Esophagus muscularis mucosa (tissue), 4 donors: ENCODE measurements at regions of chr11 and their contacts with region 1.

Region 1: GRCh38 chr11:134019500-134019899 is 49.4 kb upstream of the JAM3 start:
- DNase-seq: no peak
- H3K4me3 ChIP-seq: no peak overlapping the region
- H3K27ac ChIP-seq: no peak overlapping the region
- H3K4me1 ChIP-seq: peaks cover 2 to 17% (median 14%) of the 10 kb centered on the region in 4 donors
- H3K27me3 ChIP-seq: no peaks in the 10 kb centered on the region
- CTCF ChIP-seq: no peak
- EP300 ChIP-seq: no peak
- POLR2A ChIP-seq: no peak

Region 2: GRCh38 chr11:133834682-133835592 is 184.6 kb before region 1 on chr11:
- intact Hi-C with region 1: no loop called
- DNase-seq: peak; percentile 87
- H3K4me3 ChIP-seq: no peak overlapping the region
- H3K27ac ChIP-seq: no peak overlapping the region
- H3K4me1 ChIP-seq: peaks cover 0 to 13% (median 0%) of the 10 kb centered on the region in 4 donors
- H3K27me3 ChIP-seq: peaks cover 0 to 28% (median 9%) of the 10 kb centered on the region in 4 donors
- CTCF ChIP-seq: peak; percentile 67 to 77 (median 70)
- EP300 ChIP-seq: no peak
- POLR2A ChIP-seq: no peak

Region 3: DNA sequence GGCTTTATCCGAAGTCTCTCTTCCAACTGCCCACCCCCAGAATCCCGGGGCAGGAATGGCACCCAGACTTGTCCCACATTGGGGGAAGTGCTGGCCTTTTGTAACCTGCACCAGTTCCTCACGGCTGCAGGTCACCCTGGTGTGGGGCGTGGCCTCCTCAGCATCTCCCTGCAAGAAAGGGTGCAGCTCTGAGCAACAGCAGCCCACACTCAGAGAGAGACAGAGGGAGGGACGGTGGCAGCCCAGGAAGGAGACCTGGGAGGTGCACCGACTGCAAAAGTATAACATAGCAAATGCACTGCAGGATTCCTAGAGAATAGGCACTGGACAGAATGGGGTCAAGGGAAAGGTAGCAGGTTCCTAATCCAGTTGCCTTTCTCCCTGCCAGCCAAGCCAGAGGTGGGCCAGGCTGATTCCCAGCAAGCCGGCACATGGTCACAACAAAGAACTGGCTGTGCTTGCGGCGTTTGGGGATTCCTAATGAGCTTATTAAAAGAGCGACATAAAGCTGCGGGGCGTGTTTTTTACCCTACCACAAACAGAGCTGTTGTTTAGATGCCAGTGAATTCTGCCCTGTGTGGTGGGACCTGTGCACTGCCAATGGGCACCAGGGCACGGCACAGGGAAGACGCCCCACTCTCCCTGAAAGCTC is 44.5 kb before region 1 on chr11:
- intact Hi-C with region 1: loop called (anchors 5 kb)
- DNase-seq: no peak
- H3K4me3 ChIP-seq: no peak overlapping the region
- H3K27ac ChIP-seq: no peak overlapping the region
- H3K4me1 ChIP-seq: no peaks in the 10 kb centered on the region
- H3K27me3 ChIP-seq: peaks cover 0 to 12% (median 0%) of the 10 kb centered on the region in 4 donors
- CTCF ChIP-seq: no peak
- EP300 ChIP-seq: no peak
- POLR2A ChIP-seq: no peak